ENCODE measurements at regions of chrX and their contacts with region 1.

Region 1: DNA sequence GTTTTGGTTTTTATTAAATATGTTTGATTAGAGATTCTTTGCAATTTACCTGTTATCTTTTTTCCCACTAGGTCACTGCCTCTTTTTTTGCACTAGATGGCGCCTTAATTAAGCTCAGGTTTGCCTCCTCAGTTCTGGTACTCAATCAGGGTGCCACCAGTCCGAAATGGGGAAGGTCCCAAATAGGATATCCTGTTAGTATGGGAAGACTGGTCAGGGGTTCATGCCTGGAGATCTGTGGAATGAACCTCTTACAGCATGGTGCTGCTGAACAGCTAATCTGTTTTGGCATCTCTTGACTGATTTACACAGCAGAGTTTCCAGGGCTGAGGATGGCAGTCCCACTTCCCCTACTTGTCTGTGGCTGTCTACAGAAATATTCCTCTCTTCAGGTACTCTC is 24.2 kb upstream of the VSIG1 start:
- DNase-seq: peak; percentile 11 to 21 (median 16)
- ATAC-seq: 0 out of 3 replicates have a peak, but pooled peaks have one; percentile 53
- H3K4me3 ChIP-seq: no peak overlapping the region
- H3K27ac ChIP-seq: no peak overlapping the region
- H3K4me1 ChIP-seq: no peaks in the 10 kb centered on the region
- H3K27me3 ChIP-seq: no peaks in the 10 kb centered on the region
- CTCF ChIP-seq: peak; percentile 51 to 58 (median 56)
- EP300 ChIP-seq: no peak
- POLR2A ChIP-seq: no peak
- RAD21 ChIP-seq: peak; percentile 39 to 71; a peak in 3 of 4 replicates

Region 2: GRCh38 chrX:108064613-108065012 is 44.0 kb after region 1 on chrX:
- CTCF ChIA-PET with region 1: no interaction called
- POLR2A ChIA-PET with region 1: no interaction called
- in situ Hi-C with region 1: no loop called
- intact Hi-C with region 1: loop called (anchors 2 kb)
- DNase-seq: no peak
- ATAC-seq: no peak
- H3K4me3 ChIP-seq: no peak overlapping the region
- H3K27ac ChIP-seq: no peak overlapping the region
- H3K4me1 ChIP-seq: no peaks in the 10 kb centered on the region
- H3K27me3 ChIP-seq: no peaks in the 10 kb centered on the region
- CTCF ChIP-seq: no peak
- EP300 ChIP-seq: no peak
- POLR2A ChIP-seq: no peak
- RAD21 ChIP-seq: no peak

Region 3: GRCh38 chrX:108138814-108139702 is 118.4 kb after region 1 on chrX:
- CTCF ChIA-PET with region 1: no interaction called
- POLR2A ChIA-PET with region 1: no interaction called
- in situ Hi-C with region 1: no loop called
- intact Hi-C with region 1: loop called (anchors 1 kb)
- DNase-seq: peak; percentile 24 to 44 (median 26)
- ATAC-seq: peak; percentile 89
- H3K4me3 ChIP-seq: no peak overlapping the region
- H3K27ac ChIP-seq: no peak overlapping the region
- H3K4me1 ChIP-seq: no peaks in the 10 kb centered on the region
- H3K27me3 ChIP-seq: no peaks in the 10 kb centered on the region
- CTCF ChIP-seq: peak; percentile 57 to 69 (median 64)
- EP300 ChIP-seq: no peak
- POLR2A ChIP-seq: no peak
- RAD21 ChIP-seq: peak; percentile 35 to 57

Region 4: GRCh38 chrX:108537005-108537404 is 516.4 kb after region 1 on chrX:
- CTCF ChIA-PET with region 1: no interaction called
- POLR2A ChIA-PET with region 1: no interaction called
- in situ Hi-C with region 1: no loop called
- intact Hi-C with region 1: loop called (anchors 10 kb)
- DNase-seq: peak; percentile 15 to 44 (median 18)
- ATAC-seq: peak; percentile 84
- H3K4me3 ChIP-seq: no peak overlapping the region
- H3K27ac ChIP-seq: no peak overlapping the region
- H3K4me1 ChIP-seq: no peaks in the 10 kb centered on the region
- H3K27me3 ChIP-seq: no peaks in the 10 kb centered on the region
- CTCF ChIP-seq: peak; percentile 47 to 69 (median 58); a peak in 5 of 6 replicates
- EP300 ChIP-seq: no peak
- POLR2A ChIP-seq: no peak
- RAD21 ChIP-seq: peak; percentile 48 to 66